CD4-positive, alpha-beta memory T cell (primary cell): ENCODE measurements at regions of chr6 and their contacts with region 1.

Region 1: DNA sequence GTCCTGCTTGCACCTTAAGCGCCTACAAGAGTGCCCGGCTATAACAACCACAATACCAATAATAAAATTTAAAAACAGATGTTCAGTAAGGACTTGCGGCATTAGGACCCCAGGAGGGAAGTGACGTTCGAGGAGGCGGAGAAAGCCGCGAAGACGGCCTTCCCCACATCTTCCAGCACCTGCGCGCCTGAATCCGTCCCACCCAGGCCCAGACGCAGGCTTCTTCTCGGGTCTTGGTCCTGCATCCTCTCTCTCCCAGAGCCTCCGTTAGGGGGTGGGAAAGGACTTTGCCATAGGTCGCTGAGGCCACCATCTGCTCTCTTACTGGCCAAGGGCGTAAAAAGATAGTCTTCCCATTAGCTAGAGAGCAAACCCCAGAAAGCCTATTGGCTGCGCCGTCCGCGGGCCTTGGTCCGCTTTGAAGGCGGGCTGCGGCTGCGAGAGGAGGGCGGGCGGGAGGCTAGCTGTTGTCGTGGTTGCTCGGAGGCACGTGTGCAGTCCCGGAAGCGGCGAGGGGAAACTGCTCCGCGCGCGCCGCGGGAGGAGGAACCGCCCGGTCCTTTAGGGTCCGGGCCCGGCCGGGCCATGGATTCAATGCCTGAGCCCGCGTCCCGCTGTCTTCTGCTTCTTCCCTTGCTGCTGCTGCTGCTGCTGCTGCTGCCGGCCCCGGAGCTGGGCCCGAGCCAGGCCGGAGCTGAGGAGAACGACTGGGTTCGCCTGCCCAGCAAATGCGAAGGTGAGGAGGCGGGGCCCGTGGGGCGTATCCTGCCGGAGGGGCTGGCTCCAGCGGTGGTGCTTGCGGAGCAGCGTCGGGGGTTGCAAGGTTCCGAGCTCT is at the start of gene CNPY3:
- DNase-seq: peak; percentile 95 to 97 (median 96)
- H3K4me3 ChIP-seq: peak within 1 kb of the TSS; percentile 79 to 89
- H3K4me3 Mint-ChIP-seq: peak within 1 kb of the TSS; percentile 97 to 100 (median 98)
- H3K27ac ChIP-seq: peak within 1 kb of the TSS; percentile 86
- H3K27ac Mint-ChIP-seq: peak within 1 kb of the TSS; percentile 98 to 100 (median 99)
- H3K4me1 ChIP-seq: peaks cover 49% of the 10 kb centered on the region
- H3K4me1 Mint-ChIP-seq: peaks cover 29 to 59% (median 42%) of the 10 kb centered on the region in 4 donors
- H3K27me3 ChIP-seq: no peaks in the 10 kb centered on the region
- H3K27me3 Mint-ChIP-seq: no peaks in the 10 kb centered on the region
- total RNA-seq, gene CNPY3: 83.4 to 86.7 TPM

Region 2: DNA sequence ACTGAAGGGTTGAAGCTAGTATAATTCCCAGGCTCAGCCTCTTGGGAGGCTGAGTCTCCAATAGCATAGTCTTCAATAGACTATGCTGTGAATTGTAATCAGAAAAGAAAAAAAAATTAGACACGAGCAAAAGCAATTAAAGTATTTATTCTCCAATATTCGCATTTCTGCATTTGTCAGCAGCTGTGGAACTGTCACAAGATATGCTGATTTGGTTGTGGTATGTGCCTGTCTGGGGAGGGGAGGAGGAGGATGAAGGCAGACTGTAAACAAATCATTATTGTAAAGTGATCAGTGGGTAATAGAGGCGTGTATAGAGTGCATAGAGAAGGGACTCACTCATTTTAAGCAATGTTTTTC is 157.5 kb before region 1 on chr6:
- CTCF ChIA-PET with region 1: no interaction called
- POLR2A ChIA-PET with region 1: interaction called, 18 read pairs
- intact Hi-C with region 1: no loop called
- DNase-seq: peak in 4 of 5 donors; percentile 75 to 79 (median 77)
- H3K4me3 ChIP-seq: peak overlapping the region; percentile 7 to 11
- H3K4me3 Mint-ChIP-seq: peak overlapping the region; percentile 72 to 90 (median 84)
- H3K27ac ChIP-seq: peak overlapping the region; percentile 89
- H3K27ac Mint-ChIP-seq: peak overlapping the region; percentile 97 to 100 (median 100)
- H3K4me1 ChIP-seq: peaks cover 77% of the 10 kb centered on the region
- H3K4me1 Mint-ChIP-seq: peaks cover 54 to 88% (median 70%) of the 10 kb centered on the region in 4 donors
- H3K27me3 ChIP-seq: no peaks in the 10 kb centered on the region
- H3K27me3 Mint-ChIP-seq: no peaks in the 10 kb centered on the region

Region 3: GRCh38 chr6:42890311-42891198 is 38.6 kb before region 1 on chr6:
- CTCF ChIA-PET with region 1: no interaction called
- POLR2A ChIA-PET with region 1: interaction called, 21 read pairs
- intact Hi-C with region 1: no loop called
- DNase-seq: peak; percentile 87 to 91 (median 89)
- H3K4me3 ChIP-seq: peak overlapping the region; percentile 59 to 97
- H3K4me3 Mint-ChIP-seq: peak overlapping the region; percentile 94 to 99 (median 98)
- H3K27ac ChIP-seq: peak overlapping the region; percentile 92
- H3K27ac Mint-ChIP-seq: peak overlapping the region; percentile 93 to 99 (median 97)
- H3K4me1 ChIP-seq: peaks cover 15% of the 10 kb centered on the region
- H3K4me1 Mint-ChIP-seq: peaks cover 9 to 21% (median 12%) of the 10 kb centered on the region in 4 donors
- H3K27me3 ChIP-seq: no peaks in the 10 kb centered on the region
- H3K27me3 Mint-ChIP-seq: no peaks in the 10 kb centered on the region

Region 4: DNA sequence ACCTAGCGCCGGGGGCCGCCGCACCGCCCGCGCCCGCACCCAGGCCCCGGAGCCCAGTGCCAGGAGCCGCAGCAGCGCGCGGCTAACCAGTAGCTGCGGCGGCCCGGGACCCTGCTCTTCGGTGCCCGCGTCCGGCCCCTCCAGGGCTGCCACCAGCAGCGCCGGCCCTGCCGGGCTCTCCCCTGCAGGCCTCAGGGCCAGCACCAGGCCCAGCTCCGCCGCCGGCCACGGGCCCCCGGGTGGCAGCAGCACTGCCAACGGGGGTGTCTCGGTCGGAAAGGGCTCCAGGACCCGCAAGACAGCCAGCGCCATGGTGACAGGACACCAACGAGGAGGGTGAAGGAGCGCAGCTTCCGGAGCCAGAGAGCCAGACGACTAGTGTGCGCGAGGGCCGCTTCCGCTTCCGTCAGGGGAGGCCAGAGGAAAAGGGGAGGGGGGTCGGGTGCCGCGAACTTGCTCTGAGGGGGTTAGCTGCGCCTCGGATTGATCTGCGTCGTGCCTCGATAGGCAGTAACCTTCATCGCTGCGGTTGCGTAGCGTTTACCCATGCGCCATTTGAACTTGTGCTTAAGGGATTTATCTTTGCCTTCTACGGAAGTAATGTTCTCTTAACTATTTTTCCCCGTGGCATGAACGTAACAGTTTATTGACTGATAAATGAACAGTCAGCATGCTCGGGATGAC is 49.8 kb after region 1 on chr6 and contains the start of gene PEX6:
- CTCF ChIA-PET with region 1: interaction called, 12 read pairs
- POLR2A ChIA-PET with region 1: interaction called, 100 read pairs
- intact Hi-C with region 1: loop called (anchors 1 kb)
- DNase-seq: peak; percentile 87 to 98 (median 92)
- H3K4me3 ChIP-seq: peak within 1 kb of the TSS; percentile 70 to 75
- H3K4me3 Mint-ChIP-seq: peak within 1 kb of the TSS; percentile 92 to 99 (median 96)
- H3K27ac ChIP-seq: peak within 1 kb of the TSS; percentile 77
- H3K27ac Mint-ChIP-seq: peak within 1 kb of the TSS; percentile 93 to 99 (median 98)
- H3K4me1 ChIP-seq: peaks cover 56% of the 10 kb centered on the region
- H3K4me1 Mint-ChIP-seq: peaks cover 30 to 63% (median 43%) of the 10 kb centered on the region in 4 donors
- H3K27me3 ChIP-seq: no peaks in the 10 kb centered on the region
- H3K27me3 Mint-ChIP-seq: no peaks in the 10 kb centered on the region
- total RNA-seq, gene PEX6: 38.9 to 40.5 TPM

Region 5: DNA sequence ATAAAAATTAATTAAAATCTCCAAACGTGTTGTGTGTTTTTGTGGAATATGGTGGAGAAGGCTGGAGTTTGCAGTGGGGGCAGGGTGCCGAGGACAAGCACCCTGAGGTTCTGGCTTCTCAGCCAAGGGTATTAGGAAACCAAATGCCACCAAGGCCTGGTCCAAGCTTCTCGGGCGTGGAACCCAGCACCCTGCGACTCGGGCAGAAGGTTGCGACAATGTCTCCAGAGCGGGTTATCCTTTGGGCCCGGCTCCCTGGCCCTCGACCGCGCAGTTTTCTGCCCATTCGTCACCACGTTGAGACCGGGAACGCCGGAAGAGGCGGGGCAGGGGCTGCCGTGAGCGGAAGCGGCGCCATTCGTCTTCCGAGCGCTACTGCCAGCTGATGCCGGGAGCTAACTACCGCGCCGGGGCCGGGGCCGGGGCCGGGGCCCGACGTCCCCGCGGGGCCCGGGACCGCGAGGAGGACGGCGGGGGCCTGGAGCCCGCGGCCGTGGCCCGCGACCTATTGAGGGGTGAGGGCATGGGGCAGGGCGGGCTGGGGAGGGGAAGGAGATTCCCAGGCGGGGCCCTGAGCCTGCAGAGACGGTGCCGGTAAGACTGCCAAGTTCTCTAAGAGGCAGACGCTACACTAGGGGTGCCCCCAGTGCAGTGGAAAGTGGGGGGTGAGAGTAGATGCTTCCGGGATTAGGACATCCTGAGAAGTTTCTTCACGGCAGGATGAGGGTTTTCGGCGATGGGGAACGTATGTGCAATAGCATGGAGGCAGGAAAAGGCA is 92.3 kb after region 1 on chr6 and contains the start of gene RRP36:
- CTCF ChIA-PET with region 1: no interaction called
- POLR2A ChIA-PET with region 1: interaction called, 32 read pairs
- intact Hi-C with region 1: no loop called
- DNase-seq: peak; percentile 47 to 72 (median 50)
- H3K4me3 ChIP-seq: peak within 1 kb of the TSS; percentile 84
- H3K4me3 Mint-ChIP-seq: peak within 1 kb of the TSS; percentile 94 to 100 (median 98)
- H3K27ac ChIP-seq: peak within 1 kb of the TSS; percentile 68
- H3K27ac Mint-ChIP-seq: peak within 1 kb of the TSS; percentile 79 to 98 (median 95)
- H3K4me1 ChIP-seq: peaks cover 41% of the 10 kb centered on the region
- H3K4me1 Mint-ChIP-seq: peaks cover 14 to 58% (median 31%) of the 10 kb centered on the region in 4 donors
- H3K27me3 ChIP-seq: no peaks in the 10 kb centered on the region
- H3K27me3 Mint-ChIP-seq: no peaks in the 10 kb centered on the region
- total RNA-seq, gene RRP36: 56.5 to 58.7 TPM

Region 6: DNA sequence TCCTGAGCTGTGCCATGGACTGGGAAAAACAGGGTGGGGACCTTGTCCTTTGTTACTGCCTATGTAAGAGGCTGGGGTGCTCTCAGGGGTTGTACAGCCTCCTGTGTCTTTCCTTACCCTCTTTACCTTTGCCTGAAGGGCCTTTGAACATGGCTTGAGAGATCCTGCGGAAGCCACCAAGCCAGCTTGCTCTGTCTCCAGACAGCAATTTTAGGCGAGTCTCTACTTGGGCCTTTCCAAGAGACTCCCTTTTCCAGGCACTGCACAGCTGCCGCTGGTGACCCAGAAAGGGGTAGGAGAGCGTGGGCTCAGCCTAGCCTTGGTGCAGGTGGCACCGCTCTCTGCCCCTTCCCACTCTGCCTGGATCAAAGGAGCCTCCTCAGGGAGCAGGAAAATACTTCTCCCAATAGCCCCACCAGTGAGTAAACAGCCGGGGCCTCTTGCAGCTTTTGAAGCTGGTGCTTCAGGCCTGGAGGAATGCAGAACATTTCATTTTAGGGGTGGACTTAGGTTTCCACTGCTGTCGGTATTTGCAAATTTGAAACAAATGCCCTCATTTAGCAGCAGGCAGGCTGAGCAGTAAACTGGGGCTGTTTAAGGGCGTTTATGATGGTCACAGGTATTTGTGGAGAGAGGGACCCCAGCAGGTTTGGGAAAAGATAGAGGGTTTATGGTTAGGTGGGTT is 160.8 kb after region 1 on chr6:
- CTCF ChIA-PET with region 1: no interaction called
- POLR2A ChIA-PET with region 1: no interaction called
- intact Hi-C with region 1: no loop called
- DNase-seq: no peak
- H3K4me3 ChIP-seq: no peak overlapping the region
- H3K4me3 Mint-ChIP-seq: no peak overlapping the region
- H3K27ac ChIP-seq: no peak overlapping the region
- H3K27ac Mint-ChIP-seq: peak overlapping the region in 1 of 7 donors; percentile 60
- H3K4me1 ChIP-seq: peaks cover 15% of the 10 kb centered on the region
- H3K4me1 Mint-ChIP-seq: peaks cover 12 to 18% (median 15%) of the 10 kb centered on the region in 4 donors
- H3K27me3 ChIP-seq: no peaks in the 10 kb centered on the region
- H3K27me3 Mint-ChIP-seq: no peaks in the 10 kb centered on the region

Region 7: DNA sequence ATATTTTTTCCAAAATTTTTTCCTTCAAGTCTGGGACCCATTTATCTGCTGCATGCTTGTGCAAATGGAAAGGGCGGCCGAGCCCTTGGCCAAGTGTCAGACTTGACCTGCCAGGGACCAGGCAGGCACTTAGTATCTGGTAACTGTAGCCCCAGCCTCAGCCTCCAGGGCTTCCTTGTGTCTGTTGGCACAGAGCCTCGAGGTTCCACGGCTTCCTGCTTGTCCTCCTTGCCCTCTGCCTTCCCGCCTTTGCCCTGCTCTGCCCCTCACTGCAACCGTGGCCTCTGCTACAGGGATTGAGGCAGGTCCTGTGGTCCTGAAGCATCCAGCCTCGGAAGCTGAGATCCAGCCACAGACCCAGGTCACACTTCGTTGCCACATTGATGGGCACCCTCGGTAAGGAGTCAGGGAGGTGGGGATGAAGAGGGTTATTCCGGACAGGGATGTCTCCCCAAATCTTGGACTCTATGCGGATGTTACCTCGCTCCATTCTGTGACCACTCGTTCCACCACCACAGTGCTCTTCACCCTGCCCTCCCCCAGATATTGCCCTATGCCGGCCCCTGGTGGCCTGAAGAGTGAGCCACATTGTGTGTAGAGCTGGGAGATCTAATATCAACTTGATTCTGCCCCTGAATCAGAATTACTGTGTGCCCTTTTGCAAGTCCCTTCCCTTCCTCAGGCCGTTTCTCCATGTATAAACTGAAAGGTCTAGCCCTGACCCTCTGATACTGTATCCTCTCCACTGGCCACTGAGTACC is 200.4 kb after region 1 on chr6:
- CTCF ChIA-PET with region 1: no interaction called
- POLR2A ChIA-PET with region 1: no interaction called
- intact Hi-C with region 1: no loop called
- DNase-seq: peak in 1 of 5 donors; percentile 6
- H3K4me3 ChIP-seq: no peak overlapping the region
- H3K4me3 Mint-ChIP-seq: no peak overlapping the region
- H3K27ac ChIP-seq: no peak overlapping the region
- H3K27ac Mint-ChIP-seq: peak overlapping the region in 1 of 7 donors; percentile 17
- H3K4me1 ChIP-seq: no peaks in the 10 kb centered on the region
- H3K4me1 Mint-ChIP-seq: no peaks in the 10 kb centered on the region
- H3K27me3 ChIP-seq: no peaks in the 10 kb centered on the region
- H3K27me3 Mint-ChIP-seq: peaks cover 0 to 2% of the 10 kb centered on the region in 2 donors

Region 8: GRCh38 chr6:43143235-43144124 is 214.3 kb after region 1 on chr6:
- CTCF ChIA-PET with region 1: interaction called, 16 read pairs
- POLR2A ChIA-PET with region 1: interaction called, 6 read pairs
- intact Hi-C with region 1: no loop called
- DNase-seq: peak; percentile 67 to 79 (median 71)
- H3K4me3 ChIP-seq: no peak overlapping the region
- H3K4me3 Mint-ChIP-seq: peak overlapping the region in 3 of 8 donors; percentile 39 to 69 (median 43)
- H3K27ac ChIP-seq: no peak overlapping the region
- H3K27ac Mint-ChIP-seq: peak overlapping the region in 1 of 7 donors; percentile 85
- H3K4me1 ChIP-seq: peaks cover 12% of the 10 kb centered on the region
- H3K4me1 Mint-ChIP-seq: peaks cover 1 to 11% (median 3%) of the 10 kb centered on the region in 4 donors
- H3K27me3 ChIP-seq: no peaks in the 10 kb centered on the region
- H3K27me3 Mint-ChIP-seq: peaks cover 0 to 1% of the 10 kb centered on the region in 2 donors